Vagina (tissue), 2 donors: ENCODE measurements at regions of chr19 and their contacts with region 1.

Region 1: DNA sequence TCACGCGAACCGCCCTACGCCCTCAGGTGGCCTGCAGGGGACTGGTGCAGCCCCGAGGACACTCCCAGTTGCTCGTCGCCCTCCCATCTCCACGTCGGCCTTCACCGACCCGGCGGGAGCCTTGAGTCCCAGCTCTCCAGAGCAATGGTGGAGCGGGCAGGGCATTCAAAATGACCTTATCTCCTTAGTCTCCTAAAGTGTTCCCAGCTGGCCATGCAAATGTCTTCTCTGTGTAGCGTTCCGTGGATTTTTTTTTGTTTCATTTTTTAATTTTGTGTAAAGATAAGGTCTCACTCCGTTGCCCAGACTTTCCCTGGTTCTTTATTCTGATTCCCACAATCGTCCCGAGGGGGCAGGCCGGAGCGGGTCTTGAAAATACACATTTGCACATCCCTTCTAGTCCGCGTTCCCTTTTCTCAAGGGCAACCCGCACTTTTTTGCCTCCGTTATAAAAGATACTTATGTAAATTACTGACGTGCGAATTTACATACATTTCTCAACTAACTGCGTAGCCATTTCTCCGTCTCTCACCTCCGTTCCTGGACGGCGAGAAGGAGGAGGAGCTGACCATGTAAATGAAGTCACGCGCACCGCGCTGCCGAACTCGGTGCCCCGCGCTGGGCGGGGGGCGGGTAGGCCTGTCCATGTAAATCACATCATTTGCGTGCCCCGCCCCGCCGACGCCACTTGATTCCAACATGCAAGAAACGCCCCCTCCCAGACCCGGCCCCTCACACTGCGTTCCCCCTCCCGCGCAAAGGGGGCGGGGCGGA is 581 bp upstream of the EGLN2 start:
- DNase-seq: peak; percentile 100
- H3K4me3 ChIP-seq: peak overlapping the region; percentile 73 to 95
- H3K27ac ChIP-seq: peak overlapping the region; percentile 91
- H3K4me1 ChIP-seq: peaks cover 46% of the 10 kb centered on the region
- H3K27me3 ChIP-seq: no peaks in the 10 kb centered on the region
- CTCF ChIP-seq: peak in 2 of 3 experiments; percentile 18 to 48
- POLR2A ChIP-seq: peak in 1 of 2 donors; percentile 45

Region 2: GRCh38 chr19:40662921-40663694 is 135.3 kb before region 1 on chr19:
- intact Hi-C with region 1: loop called (anchors 5 kb)
- DNase-seq: peak in 1 of 2 donors; percentile 95
- H3K4me3 ChIP-seq: peak overlapping the region; percentile 49 to 71
- H3K27ac ChIP-seq: peak overlapping the region; percentile 93
- H3K4me1 ChIP-seq: peaks cover 47% of the 10 kb centered on the region
- H3K27me3 ChIP-seq: no peaks in the 10 kb centered on the region
- CTCF ChIP-seq: peak in 2 of 3 experiments; percentile 96 to 97
- POLR2A ChIP-seq: peak in 1 of 2 donors; percentile 28

Region 3: GRCh38 chr19:40716655-40717324 is 81.6 kb before region 1 on chr19 and contains the starts of genes COQ8B and ITPKC:
- intact Hi-C with region 1: loop called (anchors 5 kb)
- DNase-seq: peak; percentile 98 to 99
- H3K4me3 ChIP-seq: peak within 1 kb of the TSS; percentile 63 to 92
- H3K27ac ChIP-seq: peak within 1 kb of the TSS; percentile 99
- H3K4me1 ChIP-seq: peaks cover 76% of the 10 kb centered on the region
- H3K27me3 ChIP-seq: no peaks in the 10 kb centered on the region
- CTCF ChIP-seq: no peak
- POLR2A ChIP-seq: peak in 1 of 2 donors; percentile 77
- total RNA-seq, gene COQ8B: 51.1 TPM
- total RNA-seq, gene ITPKC: 92.6 TPM

Region 4: GRCh38 chr19:41872775-41873647 is 1074.6 kb after region 1 on chr19:
- intact Hi-C with region 1: loop called (anchors 5 kb)
- DNase-seq: no peak
- H3K4me3 ChIP-seq: no peak overlapping the region
- H3K27ac ChIP-seq: peak overlapping the region; percentile 17
- H3K4me1 ChIP-seq: peaks cover 8% of the 10 kb centered on the region
- H3K27me3 ChIP-seq: no peaks in the 10 kb centered on the region
- CTCF ChIP-seq: peak in 2 of 3 experiments; percentile 22 to 31
- POLR2A ChIP-seq: no peak